ENCODE measurements at regions of chr10 and their contacts with region 1.

Region 1: DNA sequence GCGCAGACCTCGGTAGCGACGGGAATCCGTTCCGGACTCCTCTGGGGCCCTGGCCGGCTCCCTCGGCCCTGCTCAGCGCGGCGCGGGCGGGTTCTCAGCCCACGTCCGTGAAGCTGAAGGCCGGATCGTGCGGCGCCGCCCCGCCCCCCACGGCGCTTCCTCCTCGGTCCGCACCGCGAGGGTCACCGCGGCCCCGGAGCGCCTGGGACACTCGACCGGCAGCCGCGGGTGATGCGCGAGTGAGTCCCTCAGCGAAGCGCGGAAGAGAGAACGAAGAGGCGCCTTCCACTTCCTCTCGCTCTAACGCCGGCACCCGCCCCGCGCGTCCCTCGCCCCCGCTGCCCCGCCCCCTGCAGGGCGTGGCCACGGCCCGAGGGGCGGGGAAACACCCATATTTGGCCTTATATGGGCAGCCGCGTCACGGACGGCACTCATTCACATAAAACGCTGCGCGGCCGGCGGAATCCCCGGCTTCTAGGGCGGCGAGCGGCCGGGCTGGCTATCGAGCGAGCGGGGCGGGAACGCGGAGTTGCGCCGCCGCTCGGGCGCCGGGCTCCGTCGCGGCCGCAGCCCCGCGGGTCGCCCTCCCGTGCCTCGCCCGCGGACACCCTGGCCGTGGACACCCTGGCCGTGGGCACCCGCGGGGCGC is at the start of gene DUSP5:
- DNase-seq: peak; percentile 89 to 98 (median 95)
- ATAC-seq: peak; percentile 83
- H3K4me3 ChIP-seq: peak within 1 kb of the TSS; percentile 80
- H3K4me3 Mint-ChIP-seq: peak within 1 kb of the TSS; percentile 96
- H3K27ac ChIP-seq: peak within 1 kb of the TSS; percentile 53 to 64
- H3K27ac Mint-ChIP-seq: peak within 1 kb of the TSS; percentile 84
- H3K4me1 ChIP-seq: peaks cover 62% of the 10 kb centered on the region
- H3K4me1 Mint-ChIP-seq: peaks cover 63% of the 10 kb centered on the region
- H3K27me3 ChIP-seq: no peaks in the 10 kb centered on the region
- H3K27me3 Mint-ChIP-seq: no peaks in the 10 kb centered on the region
- CTCF ChIP-seq: no peak
- total RNA-seq, gene DUSP5: 64.3 to 66.2 TPM

Region 2: DNA sequence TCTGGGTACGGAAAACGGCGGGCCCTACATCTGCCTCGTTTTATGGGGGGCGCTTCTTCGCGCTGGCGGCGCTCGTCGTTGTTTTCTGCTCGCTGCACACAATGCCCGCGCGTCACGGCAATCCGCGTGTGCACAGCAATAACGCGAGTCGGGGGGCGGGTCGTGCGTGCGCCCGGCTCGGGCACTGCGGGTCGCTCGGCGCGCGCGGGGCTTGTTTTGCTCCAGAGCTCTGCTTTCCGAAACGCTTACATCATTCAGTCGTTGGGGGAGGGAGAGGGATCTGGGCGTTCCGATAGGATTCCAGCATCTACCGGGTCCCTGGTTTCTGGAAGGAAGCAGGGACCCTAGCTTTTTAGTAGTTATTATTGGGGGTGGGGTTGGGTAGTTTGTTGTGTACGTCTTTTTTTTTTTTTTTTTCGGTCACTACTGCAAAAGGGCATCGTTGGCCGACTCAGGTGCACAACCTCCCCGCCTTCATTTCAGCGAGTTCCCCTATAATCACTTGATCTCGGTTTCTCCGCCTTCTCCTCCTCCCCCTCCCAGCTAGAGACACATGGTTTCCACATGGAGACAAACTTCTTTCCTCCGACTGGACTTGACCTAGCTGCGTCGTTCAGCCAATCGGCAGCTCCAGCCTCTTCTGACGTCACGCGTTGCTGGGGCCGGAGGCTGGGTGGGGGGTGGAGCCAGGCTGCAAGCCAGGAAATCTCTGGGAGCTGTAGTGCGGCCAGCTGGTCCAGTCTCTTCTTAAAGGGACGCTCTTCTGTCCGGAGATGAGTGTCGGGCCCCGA is 286.7 kb before region 1 on chr10:
- CTCF ChIA-PET with region 1: no interaction called
- POLR2A ChIA-PET with region 1: interaction called, 7 read pairs
- intact Hi-C with region 1: loop called in 1 of 2 experiments (anchors 5 kb)
- DNase-seq: peak; percentile 84 to 96 (median 87)
- ATAC-seq: peak; percentile 41
- H3K4me3 ChIP-seq: peak overlapping the region; percentile 94
- H3K4me3 Mint-ChIP-seq: peak overlapping the region; percentile 99
- H3K27ac ChIP-seq: peak overlapping the region; percentile 85 to 98
- H3K27ac Mint-ChIP-seq: peak overlapping the region; percentile 100
- H3K4me1 ChIP-seq: peaks cover 76% of the 10 kb centered on the region
- H3K4me1 Mint-ChIP-seq: peaks cover 58% of the 10 kb centered on the region
- H3K27me3 ChIP-seq: no peaks in the 10 kb centered on the region
- H3K27me3 Mint-ChIP-seq: peaks cover 5% of the 10 kb centered on the region
- CTCF ChIP-seq: no peak

Region 3: GRCh38 chr10:110354322-110354766 is 143.2 kb before region 1 on chr10:
- CTCF ChIA-PET with region 1: interaction called, 17 read pairs
- POLR2A ChIA-PET with region 1: interaction called, 15 read pairs
- intact Hi-C with region 1: loop called in 1 of 2 experiments (anchors 1 kb)
- DNase-seq: peak; percentile 64 to 86 (median 76)
- ATAC-seq: peak; percentile 28
- H3K4me3 ChIP-seq: no peak overlapping the region
- H3K4me3 Mint-ChIP-seq: peak overlapping the region; percentile 40
- H3K27ac ChIP-seq: no peak overlapping the region
- H3K27ac Mint-ChIP-seq: peak overlapping the region; percentile 96
- H3K4me1 ChIP-seq: peaks cover 60% of the 10 kb centered on the region
- H3K4me1 Mint-ChIP-seq: peaks cover 53% of the 10 kb centered on the region
- H3K27me3 ChIP-seq: no peaks in the 10 kb centered on the region
- H3K27me3 Mint-ChIP-seq: no peaks in the 10 kb centered on the region
- CTCF ChIP-seq: peak; percentile 67

Region 4: DNA sequence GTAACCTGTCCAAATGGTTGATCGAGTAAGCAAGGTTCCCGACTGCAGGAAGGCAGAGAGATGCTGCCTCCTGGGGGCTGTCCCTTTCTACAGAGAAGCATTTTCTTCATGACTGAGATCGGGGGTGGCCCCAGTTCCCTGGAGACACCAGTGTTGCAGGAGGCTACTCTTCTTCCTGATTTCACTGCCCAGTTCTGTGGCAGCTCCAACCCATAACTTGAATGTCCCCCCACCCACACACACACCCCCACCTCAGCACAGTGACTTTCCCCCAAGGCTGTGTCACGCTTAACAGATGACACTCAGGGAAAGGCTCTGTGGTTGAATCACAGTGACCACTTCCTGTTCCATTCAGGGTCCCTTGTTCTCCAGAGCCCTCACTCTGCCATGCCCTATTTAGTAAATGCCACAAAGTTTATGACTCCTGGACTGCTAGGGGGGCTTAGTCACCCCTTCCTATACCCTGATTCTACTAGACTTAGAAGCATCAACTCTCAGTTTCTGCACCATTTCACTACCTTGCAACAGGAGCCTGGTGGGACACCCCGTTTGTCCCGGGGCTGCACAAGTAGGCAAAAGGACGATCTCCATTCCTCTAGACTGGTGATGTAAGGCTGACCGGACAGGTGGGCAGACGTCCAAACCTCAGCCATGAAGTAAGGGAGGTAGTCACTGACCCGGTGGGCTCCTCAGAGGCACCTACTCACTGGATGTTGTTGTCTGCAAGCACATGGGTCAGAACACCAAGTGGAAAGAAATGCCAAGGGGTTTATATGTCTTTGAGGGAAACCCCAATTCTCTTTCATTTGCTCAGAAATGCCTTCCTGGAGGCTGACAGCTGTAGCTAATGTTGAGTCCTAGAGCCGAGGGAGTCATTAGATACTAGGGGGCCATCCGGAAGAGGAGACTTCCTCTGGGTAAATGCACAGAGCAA is 38.7 kb after region 1 on chr10:
- CTCF ChIA-PET with region 1: no interaction called
- POLR2A ChIA-PET with region 1: no interaction called
- intact Hi-C with region 1: loop called in 1 of 2 experiments (anchors 5 kb)
- DNase-seq: peak in 12 of 14 experiments; percentile 13 to 83 (median 26)
- ATAC-seq: peak; percentile 77
- H3K4me3 ChIP-seq: no peak overlapping the region
- H3K4me3 Mint-ChIP-seq: no peak overlapping the region
- H3K27ac ChIP-seq: no peak overlapping the region
- H3K27ac Mint-ChIP-seq: no peak overlapping the region
- H3K4me1 ChIP-seq: peaks cover 15% of the 10 kb centered on the region
- H3K4me1 Mint-ChIP-seq: peaks cover 14% of the 10 kb centered on the region
- H3K27me3 ChIP-seq: no peaks in the 10 kb centered on the region
- H3K27me3 Mint-ChIP-seq: no peaks in the 10 kb centered on the region
- CTCF ChIP-seq: peak; percentile 30

Region 5: DNA sequence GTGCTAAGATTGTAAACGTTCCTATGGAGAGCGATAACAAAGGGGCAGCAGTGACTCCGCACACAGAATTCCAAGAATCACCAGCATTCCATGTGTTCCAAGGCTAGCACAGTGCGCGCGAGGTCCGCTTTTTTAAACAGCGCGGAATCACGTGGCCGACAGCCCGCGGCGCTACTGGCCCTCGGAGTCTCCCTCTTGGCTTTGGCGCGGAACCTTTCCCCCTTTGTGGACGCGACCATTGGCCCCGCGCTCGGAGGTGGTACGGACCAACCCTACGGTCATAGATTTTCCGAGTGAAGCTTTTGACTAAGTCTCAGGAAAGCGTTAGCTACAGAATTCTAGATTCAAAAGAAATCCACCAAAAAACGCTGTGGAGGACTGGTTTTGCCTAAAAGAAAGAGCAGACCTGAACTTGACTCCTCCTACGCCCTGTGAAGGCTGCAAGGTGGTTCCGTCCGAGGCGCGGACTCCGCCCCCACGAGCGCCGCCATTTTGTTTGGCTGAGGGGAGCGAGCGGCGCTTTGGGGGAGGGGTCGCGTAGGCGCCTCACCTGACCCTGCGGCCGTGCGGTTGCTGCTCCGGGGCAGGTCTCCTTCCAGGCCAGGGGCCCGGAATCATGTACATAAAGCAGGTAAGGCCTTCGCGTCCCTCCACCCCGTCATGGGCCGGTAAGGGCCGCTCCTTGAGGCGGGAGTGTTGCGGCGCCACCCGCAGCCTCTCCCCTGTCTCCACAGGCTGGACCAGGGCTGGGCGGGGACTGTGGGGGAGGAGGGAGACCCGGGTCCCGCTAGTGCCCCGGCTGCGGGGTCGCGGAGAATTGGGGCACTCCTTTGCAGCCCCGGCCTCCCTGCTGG is 69.9 kb after region 1 on chr10 and contains the start of gene SMC3:
- CTCF ChIA-PET with region 1: no interaction called
- POLR2A ChIA-PET with region 1: interaction called, 10 read pairs
- intact Hi-C with region 1: loop called in 1 of 2 experiments (anchors 5 kb)
- DNase-seq: peak; percentile 82 to 96 (median 88)
- ATAC-seq: peak; percentile 86
- H3K4me3 ChIP-seq: peak within 1 kb of the TSS; percentile 96
- H3K4me3 Mint-ChIP-seq: peak within 1 kb of the TSS; percentile 98
- H3K27ac ChIP-seq: peak within 1 kb of the TSS; percentile 79 to 83
- H3K27ac Mint-ChIP-seq: peak within 1 kb of the TSS; percentile 97
- H3K4me1 ChIP-seq: peaks cover 24% of the 10 kb centered on the region
- H3K4me1 Mint-ChIP-seq: peaks cover 49% of the 10 kb centered on the region
- H3K27me3 ChIP-seq: no peaks in the 10 kb centered on the region
- H3K27me3 Mint-ChIP-seq: peaks cover 21% of the 10 kb centered on the region
- CTCF ChIP-seq: no peak
- total RNA-seq, gene SMC3: 46.8 to 48.0 TPM

Measured in CD4-positive, alpha-beta T cell (primary cell).